Dendritic cell treated with granulocyte-macrophage colony-stimulating factor and Interleukin-4, amounts not matched to agents 40 ng/mL and 50 ng/mL, for 4 days (primary cell): ENCODE measurements at regions of chr9 and their contacts with region 1.

Region 1: DNA sequence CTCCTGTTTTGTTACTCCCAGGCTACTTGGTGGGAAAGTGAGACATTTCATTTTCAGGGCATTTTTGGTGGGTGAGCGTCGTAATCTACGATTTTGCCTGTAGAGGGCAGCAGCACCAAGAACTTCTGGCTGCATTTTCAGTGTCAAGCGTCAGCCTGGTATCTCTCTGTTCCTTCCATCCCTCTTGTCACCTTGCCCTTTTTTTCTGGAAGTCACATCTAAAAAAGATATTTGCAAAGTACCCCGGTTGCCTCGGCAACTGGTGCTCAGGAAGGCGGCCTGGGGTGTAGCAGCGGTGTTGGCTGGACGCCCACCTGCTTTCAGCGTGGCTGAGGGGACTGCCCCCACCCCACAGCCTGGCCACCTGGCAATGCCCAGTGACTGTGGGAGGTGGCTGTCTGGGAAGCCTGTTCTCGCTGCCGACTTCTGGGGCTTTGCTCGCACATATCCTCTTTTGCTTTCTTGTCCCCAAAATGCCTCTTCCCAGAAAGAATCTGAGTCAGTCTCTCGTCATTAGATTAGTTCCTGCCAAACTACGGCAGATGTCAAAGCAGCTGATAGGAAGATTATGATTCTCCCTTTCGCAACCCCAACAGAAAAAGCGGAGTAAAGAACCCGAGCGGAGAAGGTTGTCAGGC is 84.5 kb downstream of the ACER2 start:
- H3K4me3 Mint-ChIP-seq: peak overlapping the region; percentile 49
- H3K27ac Mint-ChIP-seq: no peak overlapping the region
- H3K4me1 Mint-ChIP-seq: peaks cover 14% of the 10 kb centered on the region
- H3K27me3 Mint-ChIP-seq: peaks cover 7% of the 10 kb centered on the region

Region 2: GRCh38 chr9:19641046-19641445 is 147.8 kb after region 1 on chr9:
- intact Hi-C with region 1: loop called (anchors 10 kb)
- H3K4me3 Mint-ChIP-seq: no peak overlapping the region
- H3K27ac Mint-ChIP-seq: no peak overlapping the region
- H3K4me1 Mint-ChIP-seq: no peaks in the 10 kb centered on the region
- H3K27me3 Mint-ChIP-seq: peaks cover 2% of the 10 kb centered on the region

Region 3: GRCh38 chr9:20319641-20320337 is 826.5 kb after region 1 on chr9:
- intact Hi-C with region 1: no loop called
- H3K4me3 Mint-ChIP-seq: no peak overlapping the region
- H3K27ac Mint-ChIP-seq: no peak overlapping the region
- H3K4me1 Mint-ChIP-seq: no peaks in the 10 kb centered on the region
- H3K27me3 Mint-ChIP-seq: no peaks in the 10 kb centered on the region